GM12878 (cell line): ENCODE measurements at regions of chr11 and their contacts with region 1.

Region 1: GRCh38 chr11:112644410-112645131 is 316.6 kb upstream of the NCAM1 start:
- DNase-seq: peak; percentile 72
- ATAC-seq: peak; percentile 97
- H3K4me3 ChIP-seq: peak overlapping the region; percentile 29; the same call in 1 of the 2 replicates
- H3K27ac ChIP-seq: peak overlapping the region; percentile 1; the same call in 1 of the 2 replicates
- H3K4me1 ChIP-seq: peaks cover 2% of the 10 kb centered on the region; the same call in 1 of the 2 replicates
- H3K27me3 ChIP-seq: no peaks in the 10 kb centered on the region
- CTCF ChIP-seq: no peak
- EP300 ChIP-seq: 0 out of 4 replicates have a peak, but pooled peaks of 1 of the 2 experiments have one; percentile 45
- POLR2A ChIP-seq: no peak
- RAD21 ChIP-seq: no peak

Region 2: DNA sequence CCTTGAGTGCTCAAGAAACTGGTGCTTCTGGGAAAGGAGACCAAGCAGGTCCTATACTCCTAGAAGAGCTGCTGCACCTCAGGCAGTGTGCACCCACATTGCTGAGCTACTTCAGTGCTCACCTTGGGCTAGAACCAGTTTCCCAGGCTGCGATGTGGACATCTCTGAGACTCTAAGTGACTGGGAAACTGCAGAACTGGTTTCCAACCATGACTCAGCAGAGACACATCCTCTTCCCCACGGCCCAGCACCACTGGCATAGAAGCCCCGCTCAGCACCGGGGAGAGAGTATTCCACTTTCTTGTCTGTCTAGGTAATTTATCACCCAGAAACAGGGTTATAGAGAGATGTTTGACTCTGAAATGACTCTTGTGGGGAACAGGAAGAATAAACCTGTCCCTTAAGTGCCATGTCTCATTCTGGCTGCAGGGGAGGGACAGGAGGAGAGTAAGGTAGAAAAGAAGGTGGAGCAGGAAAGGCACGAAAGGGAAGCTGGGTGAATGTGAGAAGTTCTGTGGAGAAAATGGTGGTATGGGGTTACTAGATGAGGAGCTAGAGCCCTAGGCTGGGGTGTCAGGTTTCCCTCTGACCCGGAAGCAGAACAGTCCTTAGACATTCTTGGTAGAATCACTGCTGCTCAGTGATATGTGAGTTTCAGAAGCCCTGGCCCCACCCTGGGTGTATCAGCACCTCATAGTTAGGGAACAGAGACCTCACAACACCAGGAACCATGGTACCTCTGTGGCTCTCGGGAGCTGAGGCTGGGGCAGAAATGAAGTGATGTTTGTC is 23.8 kb before region 1 on chr11:
- CTCF ChIA-PET with region 1: interaction called, 3 read pairs
- POLR2A ChIA-PET with region 1: interaction called, 3 read pairs
- RAD21 ChIA-PET with region 1: interaction called, 10 read pairs
- SMC1A ChIA-PET with region 1: interaction called, 43 read pairs
- in situ Hi-C with region 1: no loop called
- intact Hi-C with region 1: no loop called
- DNase-seq: peak; percentile 37
- ATAC-seq: peak; percentile 44
- H3K4me3 ChIP-seq: no peak overlapping the region
- H3K27ac ChIP-seq: peak overlapping the region; percentile 50
- H3K4me1 ChIP-seq: peaks cover 27% of the 10 kb centered on the region
- H3K27me3 ChIP-seq: no peaks in the 10 kb centered on the region
- CTCF ChIP-seq: no peak
- EP300 ChIP-seq: no peak
- POLR2A ChIP-seq: no peak
- RAD21 ChIP-seq: no peak

Region 3: GRCh38 chr11:112627588-112628045 is 17.0 kb before region 1 on chr11:
- CTCF ChIA-PET with region 1: interaction called, 3 read pairs
- POLR2A ChIA-PET with region 1: interaction called, 4 read pairs
- RAD21 ChIA-PET with region 1: interaction called, 10 read pairs
- SMC1A ChIA-PET with region 1: interaction called, 43 read pairs
- in situ Hi-C with region 1: no loop called
- intact Hi-C with region 1: no loop called
- DNase-seq: peak; percentile 83
- ATAC-seq: peak; percentile 86
- H3K4me3 ChIP-seq: peak overlapping the region; percentile 51; the same call in 1 of the 2 replicates
- H3K27ac ChIP-seq: peak overlapping the region; percentile 88
- H3K4me1 ChIP-seq: peaks cover 61% of the 10 kb centered on the region
- H3K27me3 ChIP-seq: no peaks in the 10 kb centered on the region
- CTCF ChIP-seq: no peak
- EP300 ChIP-seq: peak; percentile 49 to 56; a peak in 3 of 4 replicates
- POLR2A ChIP-seq: peak; percentile 66
- RAD21 ChIP-seq: no peak